ENCODE measurements at regions of chr5 and their contacts with region 1.

Region 1: DNA sequence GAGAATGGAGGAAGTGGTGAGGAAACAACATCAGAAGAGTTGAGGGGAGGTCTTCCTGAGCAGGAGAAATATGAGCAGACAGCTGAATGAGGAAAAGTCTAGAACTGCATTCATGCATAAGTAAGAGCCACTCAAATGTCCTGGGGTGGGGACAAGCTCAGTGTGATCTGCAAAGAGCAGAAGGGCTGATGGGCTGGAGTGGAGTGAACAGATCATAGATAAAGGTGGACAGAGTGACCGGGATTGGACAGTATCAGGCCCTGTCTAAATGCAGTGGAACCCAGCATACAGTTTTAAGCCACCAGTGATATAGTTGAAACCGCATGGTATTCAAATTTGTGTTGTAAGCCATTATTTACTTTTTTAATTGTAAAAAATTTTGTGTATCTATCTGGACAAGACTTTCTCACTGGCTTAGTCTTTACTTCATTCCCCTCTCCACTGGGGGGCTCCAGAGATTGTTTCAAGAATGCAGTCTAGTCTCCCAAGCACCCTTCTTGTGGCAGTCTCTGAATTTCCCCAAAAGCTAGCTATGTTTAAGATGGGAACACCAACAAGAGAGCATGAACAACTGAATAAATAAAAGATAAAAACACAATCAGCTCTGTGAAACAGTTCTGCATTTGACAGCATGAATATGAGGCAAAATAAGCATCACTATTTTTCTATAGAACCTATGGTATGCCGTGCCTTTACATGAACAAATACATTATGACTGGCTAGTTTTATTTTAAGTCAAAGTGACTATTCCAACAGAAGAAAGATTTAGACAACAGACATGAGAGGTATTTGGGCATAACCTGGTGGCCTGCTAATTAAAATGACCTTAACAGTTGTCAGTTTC is 10.7 kb upstream of the STK32A start:
- DNase-seq: peak in 3 of 10 donors; percentile 20 to 26 (median 22)

Region 2: DNA sequence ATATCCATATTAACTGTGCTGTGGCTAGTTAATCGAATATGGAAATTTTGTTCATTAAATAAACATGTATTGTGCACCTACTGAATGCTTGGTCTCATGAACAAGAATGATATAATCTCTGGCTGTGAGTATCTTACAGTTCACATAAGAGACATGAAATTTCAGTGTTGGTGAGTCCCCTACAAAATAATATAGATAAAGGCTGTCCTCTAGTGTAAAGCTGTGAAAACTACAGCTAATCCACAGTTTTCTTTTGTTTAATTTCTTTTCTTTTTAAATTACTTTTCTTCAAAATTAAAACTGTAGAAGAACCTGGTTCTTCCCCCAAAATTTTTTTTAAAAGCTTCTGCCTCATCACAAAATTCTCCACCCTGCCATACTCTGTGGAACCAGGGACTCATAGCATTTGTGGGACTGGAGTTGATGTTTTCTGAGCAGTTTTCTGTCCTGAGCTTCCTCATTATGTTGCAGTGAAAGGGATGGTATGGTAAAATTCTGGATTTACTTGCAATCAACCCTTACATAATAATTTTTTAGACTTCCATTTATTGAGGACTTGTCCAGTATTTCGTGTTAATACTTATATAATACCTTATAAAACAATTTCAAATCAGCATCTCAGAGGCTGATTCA is 145.7 kb after region 1 on chr5:
- intact Hi-C with region 1: loop called (anchors 5 kb)
- DNase-seq: no peak

Region 3: DNA sequence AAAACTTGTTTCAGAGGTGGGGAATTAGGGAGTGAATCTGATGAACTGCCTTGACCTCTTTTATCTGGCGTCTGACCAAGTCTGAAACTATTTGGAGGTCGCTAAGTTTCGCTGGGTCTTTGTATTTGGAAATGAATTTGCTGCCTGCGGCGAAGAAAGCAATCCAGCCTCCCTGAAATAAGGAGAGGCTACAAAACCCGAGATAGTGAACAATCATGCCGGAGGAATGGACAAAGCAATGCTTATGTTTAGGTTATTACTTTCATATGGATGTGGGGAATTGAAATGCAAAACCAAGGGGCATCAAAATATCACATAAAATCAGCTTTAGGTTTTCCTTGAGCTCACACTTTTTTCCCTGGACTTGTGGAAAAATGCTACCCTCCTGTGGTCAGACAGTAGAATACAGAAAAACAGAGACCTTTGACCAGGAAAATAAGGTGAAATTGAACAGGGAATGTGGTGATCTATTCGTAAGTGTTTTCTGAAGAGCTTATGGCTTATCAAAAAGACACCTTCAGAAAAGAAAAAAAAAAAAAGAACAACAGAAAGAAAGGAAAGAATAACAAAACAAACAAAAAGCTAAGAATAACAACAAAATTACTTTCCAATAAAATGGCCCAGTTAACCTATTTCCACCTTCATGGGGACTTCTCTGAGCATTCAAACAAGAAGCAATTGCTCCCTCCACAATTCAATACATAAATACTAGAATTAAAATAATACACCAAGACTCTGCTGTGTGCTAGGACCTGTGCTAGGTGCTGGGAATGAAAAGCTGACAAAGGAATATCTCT is 354.3 kb after region 1 on chr5:
- intact Hi-C with region 1: loop called (anchors 2 kb)
- DNase-seq: no peak